ENCODE measurements at regions of chr6 and their contacts with region 1.

Region 1: GRCh38 chr6:142819603-142820337 is 125.2 kb downstream of the HIVEP2 start:
- DNase-seq: peak; percentile 49
- H3K4me3 Mint-ChIP-seq: peak overlapping the region; percentile 75
- H3K27ac Mint-ChIP-seq: peak overlapping the region; percentile 87
- H3K4me1 Mint-ChIP-seq: peaks cover 15% of the 10 kb centered on the region
- H3K27me3 Mint-ChIP-seq: no peaks in the 10 kb centered on the region
- CTCF ChIP-seq: no peak

Region 2: GRCh38 chr6:142773859-142774648 is 45.7 kb before region 1 on chr6:
- CTCF ChIA-PET with region 1: no interaction called
- POLR2A ChIA-PET with region 1: no interaction called
- intact Hi-C with region 1: no loop called
- DNase-seq: no peak
- H3K4me3 Mint-ChIP-seq: no peak overlapping the region
- H3K27ac Mint-ChIP-seq: no peak overlapping the region
- H3K4me1 Mint-ChIP-seq: no peaks in the 10 kb centered on the region
- H3K27me3 Mint-ChIP-seq: no peaks in the 10 kb centered on the region
- CTCF ChIP-seq: no peak

Region 3: DNA sequence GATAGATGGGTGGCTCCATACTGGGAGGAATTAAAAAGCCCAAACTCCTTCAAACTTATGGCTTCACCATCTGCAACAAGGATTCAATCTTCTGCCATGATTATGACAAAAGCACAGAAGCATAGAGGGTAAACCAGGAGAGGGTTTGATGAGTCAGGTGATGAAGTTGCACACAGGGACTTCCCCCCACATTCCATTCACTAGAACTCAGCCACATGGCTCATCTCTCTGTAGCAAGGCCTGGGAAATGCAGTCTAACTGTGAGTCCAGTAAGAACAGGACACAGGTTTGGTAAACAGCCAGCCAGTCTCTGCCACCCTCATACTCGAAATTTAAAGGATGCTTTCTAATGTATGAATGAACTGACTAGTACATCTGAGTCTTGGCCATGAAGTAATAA is 17.6 kb before region 1 on chr6:
- CTCF ChIA-PET with region 1: interaction called, 4 read pairs
- POLR2A ChIA-PET with region 1: interaction called, 21 read pairs
- intact Hi-C with region 1: no loop called
- DNase-seq: peak; percentile 96
- H3K4me3 Mint-ChIP-seq: no peak overlapping the region
- H3K27ac Mint-ChIP-seq: peak overlapping the region; percentile 75
- H3K4me1 Mint-ChIP-seq: peaks cover 10% of the 10 kb centered on the region
- H3K27me3 Mint-ChIP-seq: no peaks in the 10 kb centered on the region
- CTCF ChIP-seq: no peak

Region 4: GRCh38 chr6:142833054-142833453 is 13.3 kb after region 1 on chr6:
- CTCF ChIA-PET with region 1: interaction called, 6 read pairs
- POLR2A ChIA-PET with region 1: interaction called, 101 read pairs
- intact Hi-C with region 1: no loop called
- DNase-seq: peak; percentile 86
- H3K4me3 Mint-ChIP-seq: no peak overlapping the region
- H3K27ac Mint-ChIP-seq: peak overlapping the region; percentile 13
- H3K4me1 Mint-ChIP-seq: peaks cover 29% of the 10 kb centered on the region
- H3K27me3 Mint-ChIP-seq: no peaks in the 10 kb centered on the region
- CTCF ChIP-seq: no peak